Activated CD8-positive, alpha-beta T cell treated with anti-CD3 and anti-CD28 coated beads, Interleukin-2, amount 10 ng/mL, durations not matched to agents 7 days and 5 days (primary cell): ENCODE measurements at regions of chr9 and their contacts with region 1.

Region 1: GRCh38 chr9:126690431-126691350 is 77.0 kb downstream of the LMX1B start:
- DNase-seq: peak; percentile 75
- ATAC-seq: peak; percentile 80
- H3K4me3 Mint-ChIP-seq: no peak overlapping the region
- H3K27ac Mint-ChIP-seq: no peak overlapping the region
- H3K4me1 Mint-ChIP-seq: no peaks in the 10 kb centered on the region
- H3K27me3 Mint-ChIP-seq: peaks cover 12% of the 10 kb centered on the region

Region 2: DNA sequence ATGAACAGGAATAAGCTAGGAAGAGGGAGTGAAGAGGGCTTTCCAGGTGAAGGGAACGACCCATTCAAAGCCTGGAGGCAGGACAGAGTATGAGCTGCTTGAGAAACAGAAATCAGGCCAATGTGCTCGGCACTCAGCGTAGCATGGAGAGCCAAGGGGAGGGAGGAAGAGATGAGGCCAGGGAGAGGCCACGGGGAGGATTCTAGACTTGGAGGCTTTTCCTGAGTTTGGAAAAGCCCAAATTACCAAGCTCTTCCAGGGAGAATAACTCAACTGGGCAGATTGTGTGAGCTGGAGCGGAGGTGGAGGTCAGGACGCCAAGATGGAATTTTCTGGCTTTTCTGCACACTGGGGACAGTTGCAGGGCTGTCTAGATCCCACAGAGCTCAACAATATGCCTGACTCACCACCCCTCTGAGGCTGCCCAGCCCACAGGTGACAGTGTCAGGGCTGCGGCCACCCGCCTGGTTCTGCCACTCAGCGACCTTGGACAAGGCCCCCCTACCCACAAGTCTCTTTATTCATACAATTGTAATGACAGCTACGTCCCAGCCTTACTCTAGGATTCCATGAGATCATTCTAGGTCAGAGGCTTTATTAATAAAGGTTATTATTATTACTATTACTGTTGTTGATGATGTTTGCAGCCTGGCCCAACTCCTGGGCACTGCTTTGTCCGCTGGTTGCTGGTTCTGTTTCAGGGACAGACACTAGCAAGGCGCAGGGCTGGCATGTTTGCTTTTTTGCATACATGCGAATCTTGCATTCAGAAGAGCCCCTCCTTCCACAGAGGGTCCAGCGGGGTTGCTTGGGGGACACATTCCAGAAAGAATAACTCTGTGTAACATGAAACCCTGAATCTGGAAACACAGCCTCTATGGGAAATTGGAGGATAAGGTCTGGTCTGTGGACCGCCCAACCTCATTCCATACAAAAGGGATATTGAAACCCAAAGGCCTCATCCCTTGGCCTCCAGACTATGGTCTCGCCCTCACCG is 86.3 kb before region 1 on chr9:
- CTCF ChIA-PET with region 1: interaction called, 11 read pairs
- POLR2A ChIA-PET with region 1: no interaction called
- DNase-seq: no peak
- ATAC-seq: no peak
- H3K4me3 Mint-ChIP-seq: no peak overlapping the region
- H3K27ac Mint-ChIP-seq: no peak overlapping the region
- H3K4me1 Mint-ChIP-seq: no peaks in the 10 kb centered on the region
- H3K27me3 Mint-ChIP-seq: peaks cover 49% of the 10 kb centered on the region

Region 3: DNA sequence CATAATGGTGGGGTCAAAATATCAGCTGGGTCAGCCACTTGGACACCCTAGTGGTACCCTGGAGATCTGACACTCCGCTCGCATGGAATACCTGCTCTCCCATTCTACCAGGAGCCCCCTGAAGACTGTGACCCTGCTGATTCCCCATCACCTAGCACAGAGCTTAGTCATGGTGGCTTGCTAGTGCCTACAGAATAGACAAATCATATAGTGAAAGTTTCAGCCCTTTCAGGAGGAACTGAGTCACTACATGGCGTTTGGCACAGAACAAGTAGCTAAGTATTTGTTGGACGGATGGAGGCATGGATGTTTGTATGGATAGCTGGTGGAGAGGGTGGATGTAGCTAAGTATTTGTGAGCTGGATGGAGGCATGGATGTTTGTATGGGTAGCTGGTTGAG is 11.7 kb before region 1 on chr9:
- CTCF ChIA-PET with region 1: interaction called, 27 read pairs
- POLR2A ChIA-PET with region 1: no interaction called
- DNase-seq: no peak
- ATAC-seq: no peak
- H3K4me3 Mint-ChIP-seq: no peak overlapping the region
- H3K27ac Mint-ChIP-seq: no peak overlapping the region
- H3K4me1 Mint-ChIP-seq: peaks cover 2% of the 10 kb centered on the region
- H3K27me3 Mint-ChIP-seq: peaks cover 70% of the 10 kb centered on the region